ENCODE measurements at regions of chr12 and their contacts with region 1.

Region 1: GRCh38 chr12:112900299-112901145 is 6.2 kb upstream of the OAS1 start:
- DNase-seq: peak in 9 of 14 experiments; percentile 9 to 72 (median 42)
- ATAC-seq: peak; percentile 56
- H3K4me3 ChIP-seq: no peak overlapping the region
- H3K4me3 Mint-ChIP-seq: peak overlapping the region; percentile 22
- H3K27ac ChIP-seq: no peak overlapping the region
- H3K27ac Mint-ChIP-seq: peak overlapping the region; percentile 71
- H3K4me1 ChIP-seq: peaks cover 16% of the 10 kb centered on the region
- H3K4me1 Mint-ChIP-seq: peaks cover 44% of the 10 kb centered on the region
- H3K27me3 ChIP-seq: peaks cover 0 to 2% of the 10 kb centered on the region in 2 experiments
- H3K27me3 Mint-ChIP-seq: peaks cover 6% of the 10 kb centered on the region
- CTCF ChIP-seq: peak; percentile 90

Region 2: DNA sequence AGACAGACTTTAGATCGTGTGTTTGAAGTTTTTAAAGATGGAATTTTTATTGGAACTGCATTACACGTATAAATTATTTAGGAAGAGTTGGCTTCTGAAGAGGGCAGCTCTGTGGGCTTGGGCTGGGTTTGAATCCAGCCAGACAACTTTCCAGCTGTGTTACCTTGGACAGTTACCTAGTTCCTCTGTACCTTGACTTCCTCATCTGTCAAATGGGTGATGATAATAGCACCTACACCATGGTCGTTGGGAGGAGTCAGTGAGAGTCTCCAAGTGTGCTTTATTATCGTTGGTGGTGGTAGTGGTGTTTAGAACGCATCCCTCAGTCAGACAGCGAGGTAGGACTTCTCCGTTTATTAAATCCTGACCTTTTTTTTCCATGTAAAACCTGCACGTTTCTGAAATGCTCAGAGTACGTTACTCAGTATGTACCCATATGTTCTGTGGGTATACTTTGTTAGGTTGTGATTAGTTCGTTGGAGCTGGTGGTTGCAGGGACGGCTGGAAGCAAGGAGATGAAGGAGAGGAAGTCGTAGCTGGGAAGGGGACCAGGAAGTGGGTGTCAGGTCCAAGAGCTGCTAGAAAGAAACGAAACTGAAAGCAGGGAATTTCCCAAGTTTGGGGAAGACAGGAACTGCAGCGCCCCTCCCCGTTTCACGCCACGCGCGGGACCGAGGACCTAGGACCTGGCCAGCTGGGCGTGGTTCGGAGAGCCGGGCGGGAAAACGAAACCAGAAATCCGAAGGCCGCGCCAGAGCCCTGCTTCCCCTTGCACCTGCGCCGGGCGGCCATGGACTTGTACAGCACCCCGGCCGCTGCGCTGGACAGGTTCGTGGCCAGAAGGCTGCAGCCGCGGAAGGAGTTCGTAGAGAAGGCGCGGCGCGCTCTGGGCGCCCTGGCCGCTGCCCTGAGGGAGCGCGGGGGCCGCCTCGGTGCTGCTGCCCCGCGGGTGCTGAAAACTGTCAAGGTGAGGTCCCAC is 37.5 kb after region 1 on chr12 and contains the start of gene OAS3:
- CTCF ChIA-PET with region 1: interaction called, 3 read pairs
- POLR2A ChIA-PET with region 1: interaction called, 18 read pairs
- intact Hi-C with region 1: loop called (anchors 2 to 5 kb)
- DNase-seq: peak; percentile 33 to 92 (median 54)
- ATAC-seq: peak; percentile 66
- H3K4me3 ChIP-seq: peak within 1 kb of the TSS; percentile 82
- H3K4me3 Mint-ChIP-seq: peak within 1 kb of the TSS; percentile 93
- H3K27ac ChIP-seq: peak within 1 kb of the TSS; percentile 57 to 85
- H3K27ac Mint-ChIP-seq: peak within 1 kb of the TSS; percentile 84
- H3K4me1 ChIP-seq: peaks cover 28% of the 10 kb centered on the region
- H3K4me1 Mint-ChIP-seq: peaks cover 31% of the 10 kb centered on the region
- H3K27me3 ChIP-seq: no peaks in the 10 kb centered on the region
- H3K27me3 Mint-ChIP-seq: no peaks in the 10 kb centered on the region
- CTCF ChIP-seq: no peak
- total RNA-seq, gene OAS3: 13.9 to 14.5 TPM

Region 3: DNA sequence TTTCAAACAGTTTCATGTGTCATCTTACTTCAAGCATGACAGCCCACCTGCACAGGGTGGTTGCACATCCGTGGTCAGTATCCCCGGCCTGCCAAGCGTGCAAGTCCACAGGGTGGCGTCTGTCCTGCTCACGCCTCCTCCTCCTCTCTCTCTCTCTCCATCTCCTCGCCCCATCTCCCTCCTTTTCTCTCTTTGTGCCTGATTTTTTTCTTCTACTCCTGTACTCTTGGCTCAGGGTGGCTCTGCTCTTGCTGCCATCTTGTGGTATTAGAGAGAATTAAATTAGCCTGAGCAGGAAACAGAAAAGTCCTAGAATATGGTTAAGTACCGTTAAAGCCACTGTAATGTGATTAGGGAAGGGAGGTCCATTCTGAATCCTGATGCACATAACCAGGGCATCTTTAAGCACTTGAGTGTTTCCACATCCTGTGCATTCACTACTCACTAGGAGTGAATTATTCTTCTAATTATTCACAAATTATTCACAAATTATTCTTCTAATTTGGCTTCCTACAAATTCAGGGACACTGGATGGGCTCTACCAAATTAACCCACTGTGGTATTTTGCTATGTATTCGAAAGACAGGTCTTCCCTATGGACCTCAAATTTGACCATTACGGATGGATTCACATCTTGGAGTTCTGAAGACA is 130.5 kb after region 1 on chr12:
- CTCF ChIA-PET with region 1: no interaction called
- POLR2A ChIA-PET with region 1: no interaction called
- intact Hi-C with region 1: loop called (anchors 1 kb)
- DNase-seq: peak in 4 of 14 experiments; percentile 9 to 56 (median 51)
- ATAC-seq: peak; percentile 61
- H3K4me3 ChIP-seq: no peak overlapping the region
- H3K4me3 Mint-ChIP-seq: no peak overlapping the region
- H3K27ac ChIP-seq: no peak overlapping the region
- H3K27ac Mint-ChIP-seq: no peak overlapping the region
- H3K4me1 ChIP-seq: peaks cover 4% of the 10 kb centered on the region
- H3K4me1 Mint-ChIP-seq: no peaks in the 10 kb centered on the region
- H3K27me3 ChIP-seq: peaks cover 0 to 2% of the 10 kb centered on the region in 2 experiments
- H3K27me3 Mint-ChIP-seq: no peaks in the 10 kb centered on the region
- CTCF ChIP-seq: peak; percentile 55